IMR-90 (cell line): ENCODE measurements at regions of chr6 and their contacts with region 1.

Region 1: DNA sequence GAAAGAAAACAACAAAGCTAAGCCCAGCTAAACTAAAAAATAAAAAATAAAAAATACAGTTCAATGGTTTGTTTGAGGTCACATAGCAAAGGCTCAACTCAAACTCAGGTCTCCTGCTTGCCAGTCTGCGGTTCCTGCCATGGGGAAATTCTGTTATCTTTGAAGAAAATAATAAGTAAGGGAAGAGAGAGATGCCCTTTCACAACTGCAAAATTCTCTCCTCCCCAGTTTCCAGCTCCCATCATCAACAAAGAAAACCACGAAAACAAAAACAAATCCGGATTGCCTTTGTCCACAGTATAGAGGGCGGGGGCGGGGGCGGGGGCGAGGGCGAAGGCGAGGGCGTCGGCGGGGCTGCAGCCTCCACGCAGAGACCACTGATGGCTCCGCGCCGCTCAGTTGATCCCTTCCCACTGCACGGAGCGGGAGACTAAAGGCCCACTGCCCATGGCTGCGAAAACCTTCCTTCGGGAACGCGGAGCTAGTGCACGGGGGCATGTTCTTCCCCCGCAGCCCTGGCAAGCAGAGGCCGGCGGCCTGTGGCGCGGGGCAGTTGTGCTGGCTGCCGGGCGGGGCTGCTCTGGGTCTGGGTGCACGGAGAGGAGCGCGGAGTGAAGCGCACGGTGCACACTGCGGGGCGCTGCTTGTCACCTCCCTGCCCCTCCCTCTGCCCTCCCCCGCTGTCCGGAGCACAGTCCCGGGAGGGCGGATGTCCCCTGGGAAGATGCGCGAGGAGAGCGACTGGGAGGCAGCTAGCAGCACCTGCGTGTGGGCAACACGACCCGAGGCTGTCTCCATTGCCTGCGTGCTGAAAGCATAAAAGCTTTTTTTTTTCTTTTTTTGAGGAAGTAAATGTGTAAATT is 54.1 kb upstream of the TPD52L1 start:
- DNase-seq: peak; percentile 50
- ATAC-seq: peak; percentile 55
- H3K4me3 ChIP-seq: peak overlapping the region; percentile 54
- H3K27ac ChIP-seq: peak overlapping the region; percentile 93
- H3K4me1 ChIP-seq: peaks cover 35% of the 10 kb centered on the region
- H3K27me3 ChIP-seq: no peaks in the 10 kb centered on the region
- CTCF ChIP-seq: no peak
- POLR2A ChIP-seq: no peak
- RAD21 ChIP-seq: no peak

Region 2: DNA sequence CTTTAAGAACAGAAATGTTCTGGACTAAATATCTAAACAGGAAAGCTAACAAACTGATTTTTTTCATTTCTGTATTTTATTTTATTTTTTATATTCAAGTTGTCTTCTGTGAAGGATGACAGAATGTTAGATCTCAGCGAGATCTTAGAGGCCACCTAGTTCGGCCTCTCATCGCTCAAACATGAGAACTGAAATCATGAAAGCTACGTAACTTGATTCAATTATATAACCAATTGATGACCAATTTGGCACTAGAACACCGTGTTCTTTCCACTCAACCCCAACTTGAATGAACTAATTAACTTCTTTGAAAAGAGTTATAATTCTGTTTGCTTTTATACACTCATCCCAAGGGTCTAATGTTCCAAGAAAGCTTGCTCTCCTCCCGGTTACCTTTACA is 161.8 kb before region 1 on chr6:
- CTCF ChIA-PET with region 1: no interaction called
- POLR2A ChIA-PET with region 1: no interaction called
- dilution Hi-C with region 1: no loop called
- in situ Hi-C with region 1: no loop called
- intact Hi-C with region 1: no loop called
- DNase-seq: no peak
- ATAC-seq: no peak
- H3K4me3 ChIP-seq: no peak overlapping the region
- H3K27ac ChIP-seq: no peak overlapping the region
- H3K4me1 ChIP-seq: no peaks in the 10 kb centered on the region
- H3K27me3 ChIP-seq: no peaks in the 10 kb centered on the region
- CTCF ChIP-seq: no peak
- POLR2A ChIP-seq: no peak
- RAD21 ChIP-seq: no peak

Region 3: GRCh38 chr6:124968401-124968800 is 131.0 kb before region 1 on chr6:
- CTCF ChIA-PET with region 1: interaction called, 3 read pairs
- POLR2A ChIA-PET with region 1: interaction called, 11 read pairs
- dilution Hi-C with region 1: no loop called
- in situ Hi-C with region 1: loop called (anchors 25 kb)
- intact Hi-C with region 1: loop called (anchors 1 kb)
- DNase-seq: peak; percentile 26
- ATAC-seq: no peak
- H3K4me3 ChIP-seq: no peak overlapping the region
- H3K27ac ChIP-seq: no peak overlapping the region
- H3K4me1 ChIP-seq: peaks cover 9% of the 10 kb centered on the region; the same call in 1 of the 2 replicates
- H3K27me3 ChIP-seq: no peaks in the 10 kb centered on the region
- CTCF ChIP-seq: no peak
- POLR2A ChIP-seq: no peak
- RAD21 ChIP-seq: no peak

Region 4: GRCh38 chr6:125050663-125051318 is 48.7 kb before region 1 on chr6:
- CTCF ChIA-PET with region 1: no interaction called
- POLR2A ChIA-PET with region 1: no interaction called
- dilution Hi-C with region 1: no loop called
- in situ Hi-C with region 1: no loop called
- intact Hi-C with region 1: loop called (anchors 5 kb)
- DNase-seq: peak; percentile 64
- ATAC-seq: peak; percentile 55
- H3K4me3 ChIP-seq: no peak overlapping the region
- H3K27ac ChIP-seq: no peak overlapping the region
- H3K4me1 ChIP-seq: peaks cover 10% of the 10 kb centered on the region
- H3K27me3 ChIP-seq: no peaks in the 10 kb centered on the region
- CTCF ChIP-seq: no peak
- POLR2A ChIP-seq: no peak
- RAD21 ChIP-seq: no peak

Region 5: DNA sequence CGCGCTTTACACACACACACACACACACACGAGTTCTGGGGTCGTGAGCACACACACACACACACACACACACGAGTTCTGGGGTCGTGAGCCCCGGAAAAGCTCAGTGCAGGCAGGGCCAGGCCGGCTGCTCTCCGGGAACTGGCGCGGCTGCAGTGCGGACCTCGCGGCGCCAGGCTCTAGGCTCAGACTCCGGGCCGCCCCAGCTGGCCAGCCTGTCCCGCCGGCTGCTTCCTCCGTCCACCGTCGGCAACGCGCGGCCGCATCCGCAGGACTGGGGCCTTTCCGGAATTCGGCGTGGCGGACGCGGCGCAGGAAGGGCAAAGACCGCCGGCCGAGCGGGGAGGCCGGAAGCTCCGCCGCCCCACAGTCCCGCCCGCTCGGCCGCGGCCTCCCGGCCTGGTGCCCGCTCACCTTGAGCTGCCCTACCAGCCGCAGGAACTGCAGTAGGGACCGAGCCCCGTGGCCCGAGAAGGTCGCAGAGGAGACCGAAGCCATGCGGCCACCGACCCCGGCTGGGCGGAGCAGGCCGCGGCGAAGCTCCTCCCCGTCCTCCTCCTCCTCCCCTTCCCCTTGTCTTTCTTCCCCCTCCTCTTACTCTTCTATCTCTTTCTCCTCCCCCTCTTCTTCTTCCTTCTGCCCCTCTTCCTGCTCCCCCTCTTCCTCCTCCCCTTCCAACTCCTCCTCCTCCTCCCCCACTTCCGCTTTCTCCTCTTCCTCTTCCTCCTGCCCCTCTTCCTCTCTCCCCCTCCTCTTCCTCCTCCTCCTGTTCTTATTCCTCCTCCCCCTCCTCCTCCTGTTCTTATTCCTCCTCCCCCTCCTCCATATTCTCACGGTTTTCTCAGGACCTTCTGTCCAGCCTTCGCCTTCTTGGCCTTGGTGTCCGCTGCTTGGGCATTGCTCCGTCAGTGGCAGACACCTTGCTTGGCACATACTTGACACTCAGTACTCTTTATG is 202.3 kb after region 1 on chr6 and contains the start of gene HDDC2:
- CTCF ChIA-PET with region 1: no interaction called
- POLR2A ChIA-PET with region 1: interaction called, 9 read pairs
- dilution Hi-C with region 1: no loop called
- in situ Hi-C with region 1: no loop called
- intact Hi-C with region 1: loop called (anchors 5 kb)
- DNase-seq: peak; percentile 73
- ATAC-seq: peak; percentile 84
- H3K4me3 ChIP-seq: peak within 1 kb of the TSS; percentile 84
- H3K27ac ChIP-seq: peak within 1 kb of the TSS; percentile 98
- H3K4me1 ChIP-seq: peaks cover 4% of the 10 kb centered on the region
- H3K27me3 ChIP-seq: no peaks in the 10 kb centered on the region
- CTCF ChIP-seq: no peak
- POLR2A ChIP-seq: peak; percentile 55; the same call in 1 of the 2 replicates
- RAD21 ChIP-seq: no peak
- total RNA-seq, gene HDDC2: 40.9 and 51.4 TPM in 2 replicates

Region 6: DNA sequence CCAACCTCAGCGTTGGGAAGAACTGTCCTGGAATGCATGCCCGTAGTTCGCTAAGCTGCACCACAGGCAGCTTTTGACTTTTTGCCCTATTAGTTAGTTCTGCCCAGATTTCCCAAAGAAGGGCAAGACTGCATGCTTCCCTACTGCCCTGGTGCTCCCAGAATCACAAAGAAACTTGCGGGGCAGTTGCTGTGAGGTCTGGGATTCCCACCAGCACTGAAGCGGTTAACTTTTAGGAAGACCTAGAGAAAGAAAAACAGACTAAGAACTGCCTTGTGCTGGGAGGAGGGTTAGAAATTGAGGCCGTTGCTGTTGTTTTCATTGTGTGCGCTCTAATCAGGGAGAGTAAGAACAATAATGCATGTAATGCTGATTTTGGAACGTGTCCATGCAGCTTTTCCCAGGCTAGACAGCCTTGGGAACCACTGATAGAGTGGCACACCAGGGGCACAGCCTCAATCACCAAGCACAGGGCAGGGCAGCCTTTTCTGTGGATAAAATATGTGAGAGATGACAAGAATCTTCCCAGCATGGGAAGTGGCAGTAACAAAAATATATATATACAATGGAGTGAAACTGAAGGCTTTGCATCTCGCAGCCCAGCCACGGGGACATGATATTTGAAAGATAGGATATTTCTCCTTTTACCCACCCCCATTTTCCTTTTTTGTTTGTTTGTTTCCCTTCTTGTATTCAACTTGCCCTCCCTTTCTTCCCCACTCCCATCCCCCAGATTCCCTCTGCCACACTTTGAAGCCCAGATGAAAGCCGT is 512.3 kb after region 1 on chr6:
- CTCF ChIA-PET with region 1: no interaction called
- POLR2A ChIA-PET with region 1: no interaction called
- dilution Hi-C with region 1: no loop called
- in situ Hi-C with region 1: no loop called
- intact Hi-C with region 1: no loop called
- DNase-seq: no peak
- ATAC-seq: no peak; the same call in 1 of the 2 replicates
- H3K4me3 ChIP-seq: no peak overlapping the region
- H3K27ac ChIP-seq: no peak overlapping the region
- H3K4me1 ChIP-seq: no peaks in the 10 kb centered on the region
- H3K27me3 ChIP-seq: no peaks in the 10 kb centered on the region
- CTCF ChIP-seq: no peak
- POLR2A ChIP-seq: no peak
- RAD21 ChIP-seq: no peak

Region 7: GRCh38 chr6:126312013-126312663 is 1212.7 kb after region 1 on chr6:
- CTCF ChIA-PET with region 1: no interaction called
- POLR2A ChIA-PET with region 1: interaction called, 10 read pairs
- dilution Hi-C with region 1: no loop called
- in situ Hi-C with region 1: no loop called
- intact Hi-C with region 1: no loop called
- DNase-seq: no peak
- ATAC-seq: no peak
- H3K4me3 ChIP-seq: no peak overlapping the region
- H3K27ac ChIP-seq: no peak overlapping the region
- H3K4me1 ChIP-seq: no peaks in the 10 kb centered on the region
- H3K27me3 ChIP-seq: no peaks in the 10 kb centered on the region
- CTCF ChIP-seq: no peak; the same call in 1 of the 2 replicates
- POLR2A ChIP-seq: no peak
- RAD21 ChIP-seq: no peak